ENCODE measurements at regions of chr1 and their contacts with region 1.

Region 1: DNA sequence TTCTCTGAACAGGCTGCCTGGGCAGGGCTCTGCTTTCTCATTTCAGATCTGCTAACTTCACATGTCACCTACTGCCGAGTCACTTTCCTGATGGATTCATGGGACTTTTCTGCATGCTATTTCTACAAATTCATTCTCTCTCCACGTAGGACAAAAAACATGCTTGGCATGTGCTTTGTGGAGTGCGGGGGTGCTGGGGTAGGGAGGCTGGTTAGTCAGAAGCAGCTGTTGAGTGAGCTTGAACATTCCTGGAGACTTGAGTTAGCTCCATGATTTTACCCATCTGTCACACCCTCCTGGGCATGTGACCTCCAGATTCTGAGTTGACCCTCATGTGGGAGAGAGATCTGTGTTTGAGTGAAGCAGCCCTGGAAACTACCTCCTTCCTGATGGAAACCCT is 71.4 kb downstream of the UCK2 start:
- DNase-seq: peak in 1 of 2 donors; percentile 60
- ATAC-seq: peak; percentile 24 to 78 (median 59)
- H3K4me3 ChIP-seq: no peak overlapping the region
- H3K27ac ChIP-seq: peak overlapping the region in 7 of 10 donors; percentile 37 to 84 (median 77)
- H3K4me1 ChIP-seq: peaks cover 13 to 75% (median 62%) of the 10 kb centered on the region in 9 donors
- H3K27me3 ChIP-seq: no peaks in the 10 kb centered on the region
- CTCF ChIP-seq: no peak

Region 2: GRCh38 chr1:165768513-165769394 is 130.1 kb before region 1 on chr1 and contains the start of gene TMCO1:
- intact Hi-C with region 1: loop called in 1 of 10 experiments (anchors 10 kb)
- DNase-seq: peak; percentile 88 to 96
- ATAC-seq: peak; percentile 99 to 100 (median 100)
- H3K4me3 ChIP-seq: peak within 1 kb of the TSS; percentile 45 to 99 (median 77)
- H3K27ac ChIP-seq: peak within 1 kb of the TSS; percentile 18 to 95 (median 89)
- H3K4me1 ChIP-seq: peaks cover 0 to 61% (median 31%) of the 10 kb centered on the region in 9 donors
- H3K27me3 ChIP-seq: no peaks in the 10 kb centered on the region
- CTCF ChIP-seq: peak in 6 of 9 donors; percentile 14 to 45 (median 34)
- total RNA-seq, gene TMCO1: 41.1 to 61.3 (median 48.4) TPM

Region 3: GRCh38 chr1:165827268-165828102 is 71.4 kb before region 1 on chr1 and contains the start of gene UCK2:
- intact Hi-C with region 1: loop called in 3 of 10 experiments (anchors 5 to 10 kb)
- DNase-seq: peak; percentile 67 to 78
- ATAC-seq: peak; percentile 88 to 96 (median 93)
- H3K4me3 ChIP-seq: peak within 1 kb of the TSS; percentile 68 to 92 (median 78)
- H3K27ac ChIP-seq: peak within 1 kb of the TSS; percentile 25 to 95 (median 91)
- H3K4me1 ChIP-seq: peaks cover 0 to 20% (median 15%) of the 10 kb centered on the region in 9 donors
- H3K27me3 ChIP-seq: no peaks in the 10 kb centered on the region
- CTCF ChIP-seq: peak in 3 of 9 donors; percentile 10 to 39 (median 22)
- total RNA-seq, gene UCK2: 7.3 to 22.0 (median 11.3) TPM

Region 4: DNA sequence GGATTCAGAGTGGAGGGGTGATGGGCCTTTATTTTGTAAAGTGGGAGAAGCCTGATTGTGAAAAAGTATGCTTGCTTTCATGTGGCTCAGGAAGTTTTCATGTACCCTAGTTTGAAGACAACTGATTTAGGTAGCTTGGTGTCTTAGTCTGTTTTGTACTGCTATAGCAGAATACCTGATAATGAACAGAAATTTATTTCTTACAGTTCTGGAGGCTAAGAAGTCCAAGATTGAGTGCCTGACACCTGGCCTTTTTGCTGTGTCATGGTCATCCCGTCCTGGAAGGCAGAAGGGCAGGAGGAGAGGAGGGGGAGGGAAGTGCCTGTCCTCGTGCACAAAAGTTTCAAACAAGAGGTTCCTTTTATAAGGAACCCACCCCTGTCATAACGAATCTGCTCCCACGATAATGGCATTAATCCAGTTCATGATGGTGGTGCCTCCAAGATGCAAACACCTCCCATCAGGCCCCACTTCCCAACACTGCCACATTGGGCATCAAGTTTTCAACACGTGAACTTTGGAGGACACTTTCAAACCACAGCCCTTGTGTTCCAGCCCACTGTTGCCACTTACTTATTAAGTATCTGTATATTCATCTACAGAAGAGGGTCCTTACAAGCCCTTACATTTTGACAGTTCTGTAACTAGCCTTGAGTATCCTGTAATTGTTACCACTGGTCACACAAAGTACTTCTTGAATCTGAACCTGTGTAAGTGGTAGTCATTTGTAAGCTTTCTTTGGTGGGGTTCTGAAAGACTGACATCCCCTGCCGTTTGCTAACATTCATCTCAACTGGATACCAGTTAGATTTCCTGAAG is 62.0 kb before region 1 on chr1:
- intact Hi-C with region 1: loop called in 3 of 10 experiments (anchors 10 kb)
- DNase-seq: no peak
- ATAC-seq: no peak
- H3K4me3 ChIP-seq: no peak overlapping the region
- H3K27ac ChIP-seq: no peak overlapping the region
- H3K4me1 ChIP-seq: peaks cover 0 to 33% (median 15%) of the 10 kb centered on the region in 9 donors
- H3K27me3 ChIP-seq: no peaks in the 10 kb centered on the region
- CTCF ChIP-seq: no peak

Region 5: GRCh38 chr1:165842671-165843129 is 56.1 kb before region 1 on chr1:
- intact Hi-C with region 1: loop called in 3 of 10 experiments (anchors 10 kb)
- DNase-seq: peak in 1 of 2 donors; percentile 29
- ATAC-seq: peak in 7 of 8 donors; percentile 52 to 90 (median 72)
- H3K4me3 ChIP-seq: no peak overlapping the region
- H3K27ac ChIP-seq: no peak overlapping the region
- H3K4me1 ChIP-seq: peaks cover 0 to 38% (median 22%) of the 10 kb centered on the region in 9 donors
- H3K27me3 ChIP-seq: no peaks in the 10 kb centered on the region
- CTCF ChIP-seq: no peak

Measured in heart right ventricle (tissue), 16 donors.